BJ (cell line): ENCODE measurements at regions of chr10 and their contacts with region 1.

Region 1: DNA sequence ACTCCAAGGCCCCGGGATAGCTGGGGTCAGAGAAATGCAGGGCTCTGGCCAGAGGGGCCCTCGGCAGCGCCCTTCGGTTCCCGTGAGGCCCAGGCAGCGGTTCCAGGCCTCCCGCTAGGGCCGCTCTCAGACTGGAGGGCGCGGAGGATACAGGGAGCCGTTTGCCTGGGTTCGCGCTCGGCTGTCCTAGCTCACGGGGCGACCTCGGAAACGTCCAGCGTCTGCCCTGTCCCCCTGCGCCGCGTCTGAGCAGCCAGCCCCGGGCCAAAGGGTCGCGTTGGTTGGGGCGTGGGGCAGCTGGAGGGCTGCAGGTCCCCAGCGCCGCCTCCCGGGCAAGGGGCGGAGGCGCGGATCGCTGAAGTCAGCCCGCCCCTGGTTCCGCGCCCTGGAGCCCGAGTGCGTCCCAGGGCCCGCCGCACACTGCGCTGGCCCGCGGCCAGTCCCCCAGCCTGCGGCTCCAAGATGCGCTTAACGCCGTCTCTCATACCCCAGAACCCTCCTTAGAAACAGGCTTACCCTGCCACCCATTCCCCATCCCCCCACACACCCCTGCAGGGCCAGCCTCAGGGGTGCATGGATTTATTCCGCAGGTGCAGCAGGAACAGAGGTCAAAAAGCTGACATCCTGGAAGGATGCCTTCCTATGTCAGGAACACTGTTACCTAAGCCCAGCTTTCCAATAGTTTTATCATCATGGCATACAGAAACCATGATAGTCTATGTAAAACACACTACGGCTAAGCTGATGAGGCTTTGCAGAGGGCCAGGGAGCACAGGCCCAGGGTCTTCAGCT is 22.1 kb upstream of the OPN4 start:
- DNase-seq: no peak
- H3K4me3 ChIP-seq: peak overlapping the region; percentile 23
- H3K27me3 ChIP-seq: no peaks in the 10 kb centered on the region
- CTCF ChIP-seq: peak; percentile 43; the same call in 1 of the 2 replicates

Region 2: DNA sequence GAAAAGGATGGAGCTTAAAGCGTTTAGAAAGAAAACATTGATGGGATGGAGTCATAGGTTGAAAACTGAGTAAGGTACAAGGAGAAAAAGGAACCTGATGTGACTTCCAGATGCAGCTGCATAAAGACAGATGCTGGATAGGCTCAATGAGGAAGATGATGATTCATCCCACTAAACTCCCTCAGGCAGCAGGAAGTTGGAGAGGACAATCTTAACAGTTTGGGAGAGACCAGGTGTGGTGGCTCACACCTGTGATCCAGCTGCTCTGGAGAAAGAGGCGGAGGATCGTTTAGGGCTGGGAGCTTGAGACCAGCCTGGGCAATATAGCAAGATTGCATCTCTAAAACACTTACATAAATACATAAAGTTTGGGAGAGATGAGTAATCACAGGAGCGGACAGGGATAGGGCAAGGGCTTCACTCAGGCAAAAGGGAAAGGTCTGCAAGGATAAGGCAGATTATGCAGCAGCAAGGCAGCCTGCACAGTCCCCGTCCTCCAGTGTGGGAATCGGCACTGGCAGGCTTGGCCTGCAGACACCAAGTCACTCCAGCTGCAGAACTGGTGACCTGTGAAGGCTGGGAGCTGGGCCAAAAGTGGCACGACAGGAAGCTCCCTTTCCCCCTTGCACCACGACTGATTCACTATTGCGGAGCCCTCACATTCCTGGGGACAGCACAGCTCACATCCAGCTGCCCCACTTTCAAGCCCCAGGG is 704.1 kb before region 1 on chr10:
- CTCF ChIA-PET with region 1: no interaction called
- POLR2A ChIA-PET with region 1: no interaction called
- DNase-seq: no peak
- H3K4me3 ChIP-seq: no peak overlapping the region
- H3K27me3 ChIP-seq: no peaks in the 10 kb centered on the region
- CTCF ChIP-seq: no peak

Region 3: DNA sequence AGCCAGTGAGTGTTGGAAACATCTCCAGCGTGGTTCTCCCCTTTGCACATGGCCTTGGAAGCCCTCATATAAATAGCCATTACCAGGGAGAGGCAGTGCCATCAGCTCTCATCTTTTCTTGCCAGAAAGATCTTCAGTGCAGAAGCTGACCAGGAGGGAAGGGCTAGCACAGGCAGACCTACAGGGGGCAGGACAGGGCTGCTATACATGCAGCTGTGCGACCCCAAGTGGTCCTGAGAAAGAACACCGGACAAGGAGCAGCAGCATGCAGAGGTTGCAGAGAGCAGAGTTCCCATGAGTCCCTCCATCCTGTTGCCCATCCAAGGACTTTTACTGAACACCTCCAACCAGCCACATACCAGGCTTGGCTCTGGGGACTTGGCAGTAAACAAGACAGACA is 282.7 kb before region 1 on chr10:
- CTCF ChIA-PET with region 1: no interaction called
- POLR2A ChIA-PET with region 1: no interaction called
- DNase-seq: no peak
- H3K4me3 ChIP-seq: no peak overlapping the region
- H3K27me3 ChIP-seq: no peaks in the 10 kb centered on the region
- CTCF ChIP-seq: peak; percentile 31; the same call in 1 of the 2 replicates

Region 4: DNA sequence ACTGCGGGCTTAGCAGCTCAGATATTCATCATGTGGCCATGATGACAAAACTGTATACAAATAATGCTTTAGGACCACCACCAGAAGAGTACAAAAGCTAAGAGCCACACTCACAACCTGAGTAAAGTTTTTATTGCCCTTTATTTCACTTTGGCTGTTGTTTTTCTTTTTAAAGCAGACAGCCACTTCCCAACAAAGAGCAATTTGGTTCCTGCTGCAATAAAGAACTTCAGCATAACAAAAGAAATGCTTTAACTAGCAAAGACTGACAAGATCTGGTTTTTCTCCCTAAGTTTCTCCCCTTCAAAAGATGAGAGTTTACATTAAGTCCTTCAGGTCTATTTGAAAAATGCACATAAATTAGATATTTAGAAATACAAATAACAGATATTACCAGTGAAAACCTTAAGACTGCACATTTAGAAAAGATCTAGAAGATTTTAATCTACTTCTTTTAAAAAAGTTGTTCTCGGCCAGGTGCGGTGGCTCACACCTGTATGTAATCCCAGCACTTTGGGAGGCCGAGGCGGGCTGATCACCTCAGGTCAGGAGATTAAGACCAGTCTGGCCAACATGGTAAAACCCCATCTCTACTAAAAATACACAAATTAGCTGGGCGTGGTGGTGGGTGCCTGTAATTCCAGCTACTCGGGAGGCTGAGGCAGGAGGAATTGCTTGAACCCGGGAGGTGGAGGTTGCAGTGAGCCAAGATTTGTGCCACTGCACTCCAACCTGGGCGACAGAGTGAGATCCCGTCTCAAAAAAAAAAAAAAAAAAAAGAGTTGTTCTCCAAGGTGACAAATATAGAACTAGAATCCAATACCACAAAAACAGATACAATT is 170.0 kb before region 1 on chr10:
- CTCF ChIA-PET with region 1: no interaction called
- POLR2A ChIA-PET with region 1: interaction called, 10 read pairs
- DNase-seq: no peak
- H3K4me3 ChIP-seq: no peak overlapping the region
- H3K27me3 ChIP-seq: no peaks in the 10 kb centered on the region
- CTCF ChIP-seq: no peak

Region 5: GRCh38 chr10:86521678-86522509 is 110.3 kb before region 1 on chr10 and contains the start of gene WAPL:
- CTCF ChIA-PET with region 1: no interaction called
- POLR2A ChIA-PET with region 1: no interaction called
- DNase-seq: peak; percentile 61
- H3K4me3 ChIP-seq: peak within 1 kb of the TSS; percentile 95
- H3K27me3 ChIP-seq: no peaks in the 10 kb centered on the region
- CTCF ChIP-seq: no peak
- polyA plus RNA-seq, gene WAPL: 8.8 and 15.1 TPM in 2 replicates

Region 6: GRCh38 chr10:86599729-86600128 is 32.5 kb before region 1 on chr10:
- CTCF ChIA-PET with region 1: no interaction called
- POLR2A ChIA-PET with region 1: no interaction called
- DNase-seq: no peak
- H3K4me3 ChIP-seq: no peak overlapping the region
- H3K27me3 ChIP-seq: peaks cover 4% of the 10 kb centered on the region
- CTCF ChIP-seq: no peak